ENCODE measurements at regions of chr2 and their contacts with region 1.

Region 1: DNA sequence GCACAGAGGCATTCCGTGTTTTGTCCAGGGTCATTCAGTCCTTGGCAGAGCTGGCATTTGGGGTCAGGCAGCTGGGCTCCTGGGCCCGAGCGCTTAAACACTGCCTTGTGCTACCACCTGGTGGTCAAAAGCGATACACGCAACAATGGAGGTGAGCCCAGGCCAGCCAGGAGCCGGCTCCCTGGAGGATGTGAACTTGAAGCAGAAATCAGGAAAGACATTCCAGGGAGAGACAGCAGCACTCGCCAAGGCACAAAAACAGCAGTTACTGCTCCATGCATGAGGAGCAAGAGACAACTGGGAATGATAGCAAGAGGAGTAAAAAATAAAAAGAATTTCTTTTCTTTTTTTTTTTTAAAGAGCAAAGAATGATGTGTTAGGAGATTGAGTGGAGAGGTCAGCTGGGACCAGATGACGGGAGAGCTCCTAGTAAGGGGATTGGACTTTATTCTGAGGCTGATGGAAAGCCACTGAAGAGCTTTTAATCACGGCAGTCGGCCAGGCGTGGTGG is 20.7 kb downstream of the SCYGR8 start:
- H3K4me3 ChIP-seq: no peak overlapping the region
- H3K27ac ChIP-seq: no peak overlapping the region
- H3K4me1 ChIP-seq: 0 out of 2 replicates have a peak, but pooled peaks cover 2% of the 10 kb centered on the region
- CTCF ChIP-seq: peak; percentile 72

Region 2: GRCh38 chr2:226450141-226450540 is 1316.3 kb before region 1 on chr2:
- CTCF ChIA-PET with region 1: no interaction called
- POLR2A ChIA-PET with region 1: no interaction called
- H3K4me3 ChIP-seq: no peak overlapping the region
- H3K27ac ChIP-seq: no peak overlapping the region
- H3K4me1 ChIP-seq: no peaks in the 10 kb centered on the region
- CTCF ChIP-seq: no peak

Region 3: DNA sequence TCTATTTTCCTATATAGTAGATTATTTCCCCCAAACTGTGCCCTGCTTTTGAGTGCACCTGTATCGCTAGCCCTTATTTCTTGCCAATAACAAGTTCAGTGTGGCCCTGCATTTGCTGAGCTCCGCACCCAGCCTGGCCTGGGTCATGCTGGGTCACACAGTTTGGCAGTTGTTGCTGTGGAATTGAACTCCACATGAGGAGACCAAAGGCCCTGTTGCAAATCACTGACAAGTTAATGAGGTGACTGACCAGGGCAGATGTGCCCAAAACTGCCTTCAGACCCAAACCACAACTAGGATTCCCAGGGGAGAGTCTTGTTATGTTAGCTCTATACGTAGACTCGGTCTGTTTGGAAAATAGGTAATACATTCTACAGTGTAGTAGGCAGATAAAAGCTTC is 633.4 kb before region 1 on chr2:
- CTCF ChIA-PET with region 1: interaction called, 19 read pairs
- POLR2A ChIA-PET with region 1: no interaction called
- H3K4me3 ChIP-seq: no peak overlapping the region
- H3K27ac ChIP-seq: no peak overlapping the region
- H3K4me1 ChIP-seq: no peaks in the 10 kb centered on the region
- CTCF ChIP-seq: no peak

Region 4: GRCh38 chr2:227406177-227407031 is 360.0 kb before region 1 on chr2:
- CTCF ChIA-PET with region 1: interaction called, 39 read pairs
- POLR2A ChIA-PET with region 1: no interaction called
- H3K4me3 ChIP-seq: no peak overlapping the region
- H3K27ac ChIP-seq: 0 out of 2 replicates have a peak overlapping the region, but pooled peaks have one; percentile 6
- H3K4me1 ChIP-seq: no peaks in the 10 kb centered on the region
- CTCF ChIP-seq: peak; percentile 83

Region 5: DNA sequence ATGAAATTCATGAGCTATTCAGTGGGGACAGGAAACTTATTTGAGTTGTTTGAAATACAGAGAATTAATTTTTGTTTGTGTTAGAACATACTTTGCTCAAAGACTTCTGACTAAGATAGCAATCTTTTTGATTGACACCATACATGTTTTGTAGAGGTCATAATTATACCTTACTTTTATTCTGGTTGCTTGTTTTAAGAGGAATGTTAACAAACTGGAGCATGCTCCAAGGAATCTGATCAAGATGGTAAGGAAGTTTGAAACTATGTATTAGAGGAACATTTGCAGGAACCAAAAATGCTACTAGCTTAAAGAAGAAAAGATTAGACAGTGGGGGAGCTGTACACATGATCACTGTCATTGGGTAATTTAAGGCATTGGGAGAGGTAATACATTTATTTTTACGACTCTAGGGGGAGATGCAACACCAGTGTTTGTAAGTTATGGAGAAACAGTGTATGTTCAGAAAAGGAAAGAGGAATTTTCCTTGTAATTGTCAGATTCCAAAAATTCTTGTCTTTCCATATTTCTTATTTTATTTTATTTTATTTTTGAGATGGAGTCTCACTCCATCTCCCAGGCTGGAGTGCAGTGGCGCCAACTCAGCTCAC is 286.5 kb before region 1 on chr2:
- CTCF ChIA-PET with region 1: interaction called, 10 read pairs
- POLR2A ChIA-PET with region 1: no interaction called
- H3K4me3 ChIP-seq: no peak overlapping the region
- H3K27ac ChIP-seq: no peak overlapping the region
- H3K4me1 ChIP-seq: 0 out of 2 replicates have a peak, but pooled peaks cover 7% of the 10 kb centered on the region
- CTCF ChIP-seq: peak; percentile 63

Region 6: GRCh38 chr2:227657199-227657845 is 109.1 kb before region 1 on chr2:
- CTCF ChIA-PET with region 1: interaction called, 125 read pairs
- POLR2A ChIA-PET with region 1: interaction called, 5 read pairs
- H3K4me3 ChIP-seq: no peak overlapping the region
- H3K27ac ChIP-seq: no peak overlapping the region
- H3K4me1 ChIP-seq: no peaks in the 10 kb centered on the region
- CTCF ChIP-seq: no peak

Region 7: DNA sequence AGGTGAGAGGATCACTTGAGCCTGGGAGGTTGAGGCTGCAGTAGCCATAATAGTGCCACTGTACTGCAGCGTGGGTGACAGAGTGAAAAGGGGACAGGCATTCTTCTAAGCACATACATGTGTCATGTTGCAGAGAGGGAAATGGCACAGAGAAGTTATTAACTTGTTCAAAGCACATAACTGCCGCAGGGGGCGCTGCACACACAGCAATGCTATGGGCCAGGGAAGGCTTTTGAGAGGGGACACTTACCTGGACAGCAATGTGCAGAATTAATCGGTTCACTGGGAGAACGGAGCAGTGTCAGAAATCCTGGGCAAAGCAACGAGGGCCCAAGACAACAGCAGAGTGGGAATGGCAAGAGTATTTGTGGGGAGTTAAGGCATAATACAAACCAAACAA is 18.3 kb before region 1 on chr2:
- CTCF ChIA-PET with region 1: interaction called, 10 read pairs
- POLR2A ChIA-PET with region 1: no interaction called
- H3K4me3 ChIP-seq: no peak overlapping the region
- H3K27ac ChIP-seq: no peak overlapping the region
- H3K4me1 ChIP-seq: no peaks in the 10 kb centered on the region
- CTCF ChIP-seq: no peak

Region 8: DNA sequence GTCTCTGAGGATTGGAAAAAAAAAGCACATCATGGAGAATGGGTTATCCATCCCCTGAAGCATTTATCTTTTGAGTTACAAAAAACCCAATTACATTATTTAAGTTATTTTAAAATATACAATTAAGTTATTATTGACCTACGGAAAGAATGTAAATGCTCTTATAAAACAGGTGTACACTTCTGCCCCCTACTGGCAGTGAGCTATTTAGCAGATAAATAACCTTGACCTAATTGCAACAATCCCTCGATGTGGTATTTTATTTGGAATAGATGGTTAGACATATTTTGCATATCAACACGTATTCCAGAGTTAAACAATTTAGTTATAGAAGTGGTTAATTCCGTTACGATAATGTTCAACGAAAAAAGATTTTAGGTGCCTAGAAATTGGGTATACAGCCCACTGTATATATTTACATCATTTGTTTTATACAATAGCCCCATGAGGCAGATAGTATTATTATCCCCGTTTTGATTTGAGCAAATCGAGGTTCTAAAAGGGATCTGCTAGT is 95.9 kb after region 1 on chr2:
- CTCF ChIA-PET with region 1: interaction called, 34 read pairs
- POLR2A ChIA-PET with region 1: no interaction called
- H3K4me3 ChIP-seq: no peak overlapping the region
- H3K27ac ChIP-seq: no peak overlapping the region
- H3K4me1 ChIP-seq: no peaks in the 10 kb centered on the region
- CTCF ChIP-seq: no peak

Region 9: GRCh38 chr2:228344531-228344930 is 578.1 kb after region 1 on chr2:
- CTCF ChIA-PET with region 1: no interaction called
- POLR2A ChIA-PET with region 1: no interaction called
- H3K4me3 ChIP-seq: no peak overlapping the region
- H3K27ac ChIP-seq: no peak overlapping the region
- H3K4me1 ChIP-seq: no peaks in the 10 kb centered on the region
- CTCF ChIP-seq: no peak